ENCODE measurements at regions of chr2 and their contacts with region 1.

Region 1: DNA sequence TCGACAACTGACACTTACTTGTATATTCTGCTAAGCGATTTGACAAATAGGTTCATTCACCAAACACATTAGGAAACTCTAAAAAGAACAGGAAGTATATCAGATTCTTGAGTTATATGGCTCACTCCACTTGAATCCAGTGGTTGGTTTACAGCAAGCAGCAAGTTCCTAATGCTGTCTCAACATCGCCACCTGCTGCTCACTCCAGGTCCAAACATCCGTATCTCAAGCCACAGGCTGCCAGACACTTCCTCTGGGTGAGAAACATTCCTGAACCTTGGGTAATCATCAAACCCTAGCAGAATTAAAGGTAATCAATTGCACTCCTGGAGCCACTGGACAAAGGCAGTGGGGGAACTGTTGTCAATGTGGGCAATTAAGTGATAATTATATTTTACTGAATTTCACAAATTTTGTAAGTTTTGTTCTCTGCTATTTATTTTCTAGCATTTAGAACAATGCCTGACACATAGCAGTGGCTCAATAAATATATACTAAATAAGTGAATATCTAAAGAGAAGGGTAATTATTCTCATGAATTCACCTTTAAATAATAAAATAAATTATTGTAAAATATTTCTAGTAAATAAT is 107.1 kb upstream of the TTN start:
- DNase-seq: peak; percentile 84
- ATAC-seq: peak; percentile 88

Region 2: GRCh38 chr2:178796079-178796677 is 118.2 kb before region 1 on chr2:
- intact Hi-C with region 1: loop called (anchors 2 kb)
- DNase-seq: no peak
- ATAC-seq: no peak